ENCODE measurements at regions of chr21 and their contacts with region 1.

Region 1: GRCh38 chr21:33360881-33361602 is 36.3 kb downstream of the IFNAR1 start:
- DNase-seq: peak; percentile 69 to 90 (median 77)
- H3K4me3 ChIP-seq: peak overlapping the region in 1 of 4 donors; percentile 39
- H3K27ac ChIP-seq: peak overlapping the region in 3 of 5 donors; percentile 2 to 77 (median 10)
- H3K4me1 ChIP-seq: peaks cover 0 to 13% of the 10 kb centered on the region in 2 donors
- H3K27me3 ChIP-seq: no peaks in the 10 kb centered on the region
- CTCF ChIP-seq: peak; percentile 73 to 90 (median 82)
- POLR2A ChIP-seq: no peak

Region 2: DNA sequence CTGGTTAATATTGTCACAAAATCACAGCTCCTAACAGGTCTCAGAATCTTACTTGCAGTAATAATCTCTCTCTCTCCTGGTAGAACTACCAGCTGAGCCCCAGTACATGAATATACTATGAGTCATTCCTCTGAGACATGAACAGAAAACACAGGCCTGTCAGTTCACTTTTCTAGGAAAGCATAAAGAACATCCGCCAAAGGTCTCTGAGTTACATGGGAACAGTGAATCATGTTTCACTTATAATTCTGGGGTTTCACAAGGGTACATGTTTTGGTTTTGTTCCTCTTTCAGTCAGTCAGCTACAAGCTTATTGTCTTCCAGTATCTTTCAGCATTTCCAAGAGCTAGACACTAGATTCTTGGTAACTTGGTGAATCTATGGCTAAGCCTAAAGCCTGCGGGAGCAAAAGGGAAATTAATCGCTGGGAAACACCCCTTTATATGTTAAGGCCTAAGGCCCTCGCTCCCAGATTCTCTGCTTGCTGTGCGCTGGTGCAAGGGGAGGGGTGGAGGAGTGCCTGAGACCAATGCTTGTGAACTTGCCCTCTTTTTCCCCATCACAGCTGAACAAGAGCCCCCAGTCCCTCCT is 73.8 kb after region 1 on chr21:
- intact Hi-C with region 1: loop called in 1 of 2 experiments (anchors 10 kb)
- DNase-seq: peak in 3 of 7 donors; percentile 43 to 56 (median 52)
- H3K4me3 ChIP-seq: no peak overlapping the region
- H3K27ac ChIP-seq: peak overlapping the region; percentile 62 to 88 (median 71)
- H3K4me1 ChIP-seq: peaks cover 13 to 19% of the 10 kb centered on the region in 2 donors
- H3K27me3 ChIP-seq: no peaks in the 10 kb centered on the region
- CTCF ChIP-seq: no peak
- POLR2A ChIP-seq: peak in 1 of 2 donors; percentile 30

Measured in adrenal gland (tissue), 19 donors.